SK-N-SH (cell line): ENCODE measurements at regions of chr22 and their contacts with region 1.

Region 1: DNA sequence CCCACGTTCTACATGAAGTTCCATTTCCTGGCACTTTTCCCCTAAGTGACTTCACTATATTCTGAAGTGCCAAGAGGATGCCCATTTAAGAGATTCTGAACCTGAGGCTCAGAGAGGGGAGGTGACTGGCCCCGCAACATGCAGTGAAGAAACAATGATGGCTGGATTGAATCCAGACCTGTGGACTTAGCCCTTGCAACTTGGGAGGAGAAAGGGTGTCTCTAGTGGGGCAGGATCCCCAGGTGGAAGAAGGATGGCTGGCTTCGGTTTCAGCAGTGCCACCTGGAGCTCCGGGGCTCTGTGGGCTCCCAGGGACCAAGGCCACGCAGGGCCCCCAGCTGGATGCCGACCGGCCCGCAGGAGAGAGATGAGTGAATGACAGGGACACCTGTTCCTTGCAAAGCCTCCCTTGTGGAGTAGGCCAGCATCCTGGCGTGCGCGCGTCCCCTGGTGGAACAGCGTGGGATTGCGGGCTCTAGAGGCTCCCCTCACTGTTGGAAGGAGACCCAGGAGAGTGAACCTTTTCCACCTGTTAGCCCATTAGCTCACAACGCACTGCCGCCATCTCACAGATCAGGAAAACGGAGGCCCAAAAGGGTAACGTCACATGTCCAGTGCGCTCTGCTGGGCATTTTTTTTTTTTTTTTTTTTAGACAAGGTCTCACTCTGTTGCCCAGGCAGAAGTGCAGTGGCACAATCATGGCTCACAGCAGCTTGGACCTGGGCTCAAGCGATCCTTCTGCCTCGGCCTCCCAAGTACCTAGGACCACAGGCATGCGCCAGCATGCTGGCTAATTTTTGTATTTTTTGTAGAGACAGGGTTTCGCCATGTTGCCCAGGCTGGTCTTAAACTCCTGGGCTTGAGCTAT is 104.7 kb downstream of the KIAA1671 start:
- DNase-seq: peak; percentile 79
- H3K4me3 ChIP-seq: peak overlapping the region in 1 of 2 experiments; percentile 36; a peak in 1 of 4 replicates
- H3K27ac ChIP-seq: no peak overlapping the region
- H3K4me1 ChIP-seq: peaks cover 0 to 15% of the 10 kb centered on the region in 2 experiments; a peak in 1 of 4 replicates
- H3K27me3 ChIP-seq: no peaks in the 10 kb centered on the region
- CTCF ChIP-seq: peak; percentile 73
- EP300 ChIP-seq: no peak
- RAD21 ChIP-seq: peak; percentile 76

Region 2: GRCh38 chr22:24969560-24970301 is 87.5 kb before region 1 on chr22:
- CTCF ChIA-PET with region 1: interaction called, 13 read pairs
- POLR2A ChIA-PET with region 1: no interaction called
- DNase-seq: peak; percentile 85
- H3K4me3 ChIP-seq: no peak overlapping the region; a peak in 1 of 4 replicates
- H3K27ac ChIP-seq: peak overlapping the region; percentile 96
- H3K4me1 ChIP-seq: peaks cover 27 to 30% of the 10 kb centered on the region in 2 experiments
- H3K27me3 ChIP-seq: no peaks in the 10 kb centered on the region
- CTCF ChIP-seq: no peak
- EP300 ChIP-seq: peak; percentile 89 to 94
- RAD21 ChIP-seq: no peak

Region 3: GRCh38 chr22:25067851-25068421 is 10.7 kb after region 1 on chr22:
- CTCF ChIA-PET with region 1: interaction called, 36 read pairs
- POLR2A ChIA-PET with region 1: interaction called, 3 read pairs
- DNase-seq: peak; percentile 86
- H3K4me3 ChIP-seq: no peak overlapping the region
- H3K27ac ChIP-seq: peak overlapping the region in 1 of 2 experiments; percentile 86; a peak in 2 of 4 replicates
- H3K4me1 ChIP-seq: peaks cover 0 to 43% of the 10 kb centered on the region in 2 experiments; a peak in 1 of 4 replicates
- H3K27me3 ChIP-seq: no peaks in the 10 kb centered on the region
- CTCF ChIP-seq: no peak
- EP300 ChIP-seq: no peak
- RAD21 ChIP-seq: no peak

Region 4: GRCh38 chr22:25081409-25081824 is 24.2 kb after region 1 on chr22:
- CTCF ChIA-PET with region 1: interaction called, 14 read pairs
- POLR2A ChIA-PET with region 1: no interaction called
- DNase-seq: peak; percentile 58
- H3K4me3 ChIP-seq: no peak overlapping the region
- H3K27ac ChIP-seq: no peak overlapping the region
- H3K4me1 ChIP-seq: peaks cover 0 to 20% of the 10 kb centered on the region in 2 experiments; a peak in 1 of 4 replicates
- H3K27me3 ChIP-seq: no peaks in the 10 kb centered on the region
- CTCF ChIP-seq: peak; percentile 57
- EP300 ChIP-seq: no peak
- RAD21 ChIP-seq: peak; percentile 64

Region 5: GRCh38 chr22:25134028-25134427 is 76.8 kb after region 1 on chr22:
- CTCF ChIA-PET with region 1: no interaction called
- POLR2A ChIA-PET with region 1: no interaction called
- DNase-seq: peak; percentile 47
- H3K4me3 ChIP-seq: no peak overlapping the region
- H3K27ac ChIP-seq: no peak overlapping the region
- H3K4me1 ChIP-seq: peaks cover 0 to 11% of the 10 kb centered on the region in 2 experiments; a peak in 1 of 4 replicates
- H3K27me3 ChIP-seq: no peaks in the 10 kb centered on the region
- CTCF ChIP-seq: no peak
- EP300 ChIP-seq: peak in 1 of 2 experiments; percentile 34; a peak in 1 of 4 replicates
- RAD21 ChIP-seq: no peak

Region 6: GRCh38 chr22:25223269-25223838 is 166.1 kb after region 1 on chr22:
- CTCF ChIA-PET with region 1: no interaction called
- POLR2A ChIA-PET with region 1: no interaction called
- DNase-seq: no peak
- H3K4me3 ChIP-seq: no peak overlapping the region
- H3K27ac ChIP-seq: no peak overlapping the region
- H3K4me1 ChIP-seq: peaks cover 0 to 10% of the 10 kb centered on the region in 2 experiments; a peak in 1 of 4 replicates
- H3K27me3 ChIP-seq: no peaks in the 10 kb centered on the region; the same call in 1 of the 2 replicates
- CTCF ChIP-seq: no peak
- EP300 ChIP-seq: no peak
- RAD21 ChIP-seq: no peak